ENCODE measurements at regions of chr15 and their contacts with region 1.

Region 1: DNA sequence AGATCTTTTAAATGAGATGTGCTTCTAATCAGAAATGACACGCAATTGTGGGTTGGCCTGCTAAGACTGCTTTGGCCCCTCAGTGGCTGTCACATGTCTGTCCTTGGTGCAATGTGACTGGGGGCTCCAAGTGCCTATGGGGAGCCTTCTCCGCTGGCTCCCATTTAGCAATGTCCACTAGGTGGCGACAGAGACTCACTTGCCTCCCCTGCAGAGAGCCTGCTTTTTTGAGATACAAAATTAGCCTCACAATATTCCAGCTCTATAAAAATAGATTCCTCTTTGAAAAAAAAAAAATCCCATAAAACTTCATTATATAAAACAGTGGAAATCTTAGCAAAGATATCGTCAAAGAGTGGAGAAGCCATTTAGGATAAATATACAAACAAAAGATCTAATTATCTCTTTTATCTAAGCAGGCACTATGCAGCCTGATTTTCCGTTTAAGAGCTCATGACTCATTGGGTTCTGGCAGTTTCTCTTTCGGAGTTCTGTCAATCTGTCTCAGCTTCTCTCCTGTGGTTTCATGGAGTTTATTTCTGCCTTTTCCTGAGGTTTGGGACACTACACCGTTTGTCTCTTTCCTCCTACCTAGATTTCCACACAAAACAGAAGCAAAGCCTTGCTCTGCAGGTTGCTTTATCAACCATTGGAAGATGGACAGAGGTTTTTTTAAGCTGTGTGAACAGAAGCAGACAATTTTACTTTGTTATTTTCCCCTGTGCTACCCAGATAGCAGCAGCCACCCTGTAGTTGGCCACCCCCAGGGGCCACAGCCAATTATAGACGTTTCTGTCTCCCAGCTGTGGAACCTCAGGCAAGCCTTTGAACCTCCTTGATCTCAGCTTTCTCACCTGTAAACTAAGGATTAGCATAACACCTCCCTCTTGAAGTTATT is 68.4 kb upstream of the TNFAIP8L3 start:
- DNase-seq: peak; percentile 81
- ATAC-seq: peak; percentile 95
- H3K4me3 Mint-ChIP-seq: no peak overlapping the region
- H3K27ac Mint-ChIP-seq: no peak overlapping the region
- H3K4me1 Mint-ChIP-seq: peaks cover 2% of the 10 kb centered on the region
- H3K27me3 Mint-ChIP-seq: peaks cover 17% of the 10 kb centered on the region
- CTCF ChIP-seq: peak; percentile 88

Region 2: GRCh38 chr15:51185213-51186159 is 22.4 kb after region 1 on chr15:
- CTCF ChIA-PET with region 1: interaction called, 21 read pairs
- POLR2A ChIA-PET with region 1: no interaction called
- intact Hi-C with region 1: no loop called
- DNase-seq: no peak
- ATAC-seq: no peak
- H3K4me3 Mint-ChIP-seq: no peak overlapping the region
- H3K27ac Mint-ChIP-seq: no peak overlapping the region
- H3K4me1 Mint-ChIP-seq: no peaks in the 10 kb centered on the region
- H3K27me3 Mint-ChIP-seq: peaks cover 7% of the 10 kb centered on the region
- CTCF ChIP-seq: no peak

Region 3: GRCh38 chr15:51198701-51199232 is 35.7 kb after region 1 on chr15:
- CTCF ChIA-PET with region 1: interaction called, 118 read pairs
- POLR2A ChIA-PET with region 1: no interaction called
- intact Hi-C with region 1: no loop called
- DNase-seq: no peak
- ATAC-seq: no peak
- H3K4me3 Mint-ChIP-seq: no peak overlapping the region
- H3K27ac Mint-ChIP-seq: no peak overlapping the region
- H3K4me1 Mint-ChIP-seq: no peaks in the 10 kb centered on the region
- H3K27me3 Mint-ChIP-seq: peaks cover 16% of the 10 kb centered on the region
- CTCF ChIP-seq: no peak

Region 4: GRCh38 chr15:51269547-51269946 is 106.4 kb after region 1 on chr15:
- CTCF ChIA-PET with region 1: no interaction called
- POLR2A ChIA-PET with region 1: no interaction called
- intact Hi-C with region 1: no loop called
- DNase-seq: no peak
- ATAC-seq: no peak
- H3K4me3 Mint-ChIP-seq: no peak overlapping the region
- H3K27ac Mint-ChIP-seq: no peak overlapping the region
- H3K4me1 Mint-ChIP-seq: peaks cover 3% of the 10 kb centered on the region
- H3K27me3 Mint-ChIP-seq: peaks cover 39% of the 10 kb centered on the region
- CTCF ChIP-seq: no peak

Region 5: GRCh38 chr15:51368751-51369450 is 205.8 kb after region 1 on chr15:
- CTCF ChIA-PET with region 1: interaction called, 18 read pairs
- POLR2A ChIA-PET with region 1: no interaction called
- intact Hi-C with region 1: no loop called
- DNase-seq: no peak
- ATAC-seq: no peak
- H3K4me3 Mint-ChIP-seq: no peak overlapping the region
- H3K27ac Mint-ChIP-seq: no peak overlapping the region
- H3K4me1 Mint-ChIP-seq: no peaks in the 10 kb centered on the region
- H3K27me3 Mint-ChIP-seq: no peaks in the 10 kb centered on the region
- CTCF ChIP-seq: no peak